Sigmoid colon (tissue), 7 donors: ENCODE measurements at regions of chr3 and their contacts with region 1.

Region 1: GRCh38 chr3:16177962-16178627 is 3.6 kb downstream of the GALNT15 start:
- DNase-seq: peak; percentile 91
- H3K4me3 ChIP-seq: peak overlapping the region; percentile 23 to 40 (median 36)
- H3K27ac ChIP-seq: peak overlapping the region in 1 of 4 donors; percentile 39
- H3K4me1 ChIP-seq: peaks cover 0 to 31% (median 27%) of the 10 kb centered on the region in 4 donors
- H3K27me3 ChIP-seq: no peaks in the 10 kb centered on the region
- CTCF ChIP-seq: peak; percentile 72 to 97 (median 92)
- EP300 ChIP-seq: no peak
- POLR2A ChIP-seq: no peak

Region 2: GRCh38 chr3:15629860-15630597 is 548.1 kb before region 1 on chr3:
- intact Hi-C with region 1: loop called (anchors 10 kb)
- DNase-seq: peak; percentile 85
- H3K4me3 ChIP-seq: peak overlapping the region; percentile 18 to 36 (median 28)
- H3K27ac ChIP-seq: peak overlapping the region; percentile 59 to 90 (median 76)
- H3K4me1 ChIP-seq: peaks cover 0 to 46% (median 44%) of the 10 kb centered on the region in 4 donors
- H3K27me3 ChIP-seq: no peaks in the 10 kb centered on the region
- CTCF ChIP-seq: peak in 3 of 4 experiments; percentile 72 to 87 (median 74)
- EP300 ChIP-seq: no peak
- POLR2A ChIP-seq: no peak

Region 3: DNA sequence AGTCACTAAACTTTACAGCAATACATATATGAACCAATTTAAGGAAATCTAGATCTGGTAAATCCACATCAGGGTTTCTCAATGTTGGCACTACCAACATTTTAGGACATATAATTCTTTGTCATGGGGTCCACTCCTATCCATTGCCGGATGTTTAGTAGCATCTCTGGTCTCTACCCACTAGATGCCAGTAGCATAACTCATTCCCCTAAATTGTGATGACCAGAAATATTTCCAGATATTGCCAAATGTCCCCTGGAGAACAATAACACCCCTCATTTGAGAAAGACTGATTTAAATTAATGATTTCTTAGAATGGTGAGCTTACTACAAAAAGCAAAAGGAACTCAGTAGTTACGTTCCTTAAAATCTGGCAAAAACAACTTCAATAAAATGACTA is 357.2 kb before region 1 on chr3:
- intact Hi-C with region 1: loop called (anchors 2 kb)
- DNase-seq: no peak
- H3K4me3 ChIP-seq: no peak overlapping the region
- H3K27ac ChIP-seq: no peak overlapping the region
- H3K4me1 ChIP-seq: peaks cover 0 to 9% (median 4%) of the 10 kb centered on the region in 4 donors
- H3K27me3 ChIP-seq: no peaks in the 10 kb centered on the region
- CTCF ChIP-seq: no peak
- EP300 ChIP-seq: no peak
- POLR2A ChIP-seq: no peak

Region 4: DNA sequence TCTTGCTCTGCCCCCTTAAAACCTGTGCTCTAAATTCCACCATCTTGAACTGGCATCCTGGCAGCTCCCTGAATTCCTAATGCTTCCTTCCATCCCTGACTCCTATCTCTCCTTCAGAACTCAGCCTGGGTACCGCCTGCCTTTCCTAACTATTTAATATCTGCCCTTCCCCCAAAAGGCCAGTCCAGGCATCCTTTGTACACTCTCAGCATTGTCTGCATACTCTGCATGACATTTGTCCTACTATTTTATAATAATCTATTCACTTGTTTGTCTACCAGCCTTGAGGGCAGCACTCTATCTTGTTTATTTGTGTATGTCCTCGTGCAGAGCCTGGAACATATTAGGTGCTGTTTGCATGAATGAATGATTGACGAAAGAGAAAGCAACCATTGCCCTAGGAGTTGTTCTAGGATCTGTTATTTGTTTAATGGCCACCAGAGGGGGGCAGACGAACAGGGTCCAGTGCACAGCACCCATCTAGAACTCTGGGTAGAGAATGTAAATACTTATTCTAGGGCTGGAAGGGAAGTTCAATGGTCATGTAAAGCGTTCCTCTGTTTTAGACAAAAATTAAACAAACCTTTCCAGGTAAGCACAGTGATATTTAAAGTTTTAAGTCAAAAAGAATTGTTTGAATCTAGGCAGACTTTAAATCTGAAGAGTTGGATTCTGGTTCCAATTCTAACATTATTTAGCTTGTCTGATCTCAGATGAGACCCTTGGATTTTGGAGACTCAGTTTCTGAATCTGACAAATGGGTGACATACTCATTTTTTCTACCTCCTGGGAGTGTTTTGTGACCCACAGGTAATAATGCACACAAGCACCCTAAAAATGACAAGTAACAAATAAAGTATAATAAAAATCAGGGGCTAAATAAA is 129.4 kb before region 1 on chr3:
- intact Hi-C with region 1: loop called (anchors 1 kb)
- DNase-seq: peak; percentile 82
- H3K4me3 ChIP-seq: no peak overlapping the region
- H3K27ac ChIP-seq: no peak overlapping the region
- H3K4me1 ChIP-seq: peaks cover 0 to 5% (median 2%) of the 10 kb centered on the region in 4 donors
- H3K27me3 ChIP-seq: no peaks in the 10 kb centered on the region
- CTCF ChIP-seq: peak; percentile 74 to 86 (median 76)
- EP300 ChIP-seq: no peak
- POLR2A ChIP-seq: no peak

Region 5: DNA sequence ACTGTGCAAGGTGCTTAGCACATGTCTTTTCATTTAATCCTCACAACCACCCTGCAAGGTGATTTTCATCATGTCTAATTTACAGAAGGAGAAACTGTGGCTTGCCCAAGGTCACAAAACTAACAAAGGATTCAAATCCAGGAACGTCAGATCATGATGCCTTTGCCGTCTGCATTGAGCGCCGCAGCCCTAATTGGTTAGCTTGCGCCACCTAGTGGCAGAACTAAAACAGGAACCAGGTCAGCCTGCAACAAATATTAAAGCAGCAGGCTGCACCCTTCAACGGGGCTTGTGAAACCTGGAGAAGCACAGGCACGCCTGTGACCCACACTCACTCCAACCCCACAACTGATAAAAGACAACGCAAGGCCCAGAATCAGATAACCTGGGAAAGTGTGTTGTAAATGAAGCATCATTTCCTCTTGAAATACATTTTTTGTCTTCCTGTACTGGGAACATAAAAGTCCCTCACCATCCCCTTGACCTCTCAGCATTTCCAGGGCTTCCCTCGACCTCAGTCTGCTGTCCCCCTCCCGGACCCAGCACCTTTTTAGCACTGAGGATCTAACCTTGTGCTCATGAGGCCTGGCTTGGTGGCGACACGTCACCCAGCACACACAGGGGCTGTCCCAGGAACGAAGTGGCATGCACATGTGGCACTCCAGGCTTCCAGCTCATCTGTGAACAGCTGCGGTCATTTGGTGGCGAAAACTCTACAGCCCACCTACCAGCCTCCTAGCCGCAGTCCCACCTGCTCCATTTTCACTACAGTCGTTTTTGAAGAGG is 69.4 kb after region 1 on chr3:
- intact Hi-C with region 1: loop called (anchors 2 kb)
- DNase-seq: peak; percentile 87
- H3K4me3 ChIP-seq: no peak overlapping the region
- H3K27ac ChIP-seq: no peak overlapping the region
- H3K4me1 ChIP-seq: peaks cover 0 to 19% (median 4%) of the 10 kb centered on the region in 4 donors
- H3K27me3 ChIP-seq: no peaks in the 10 kb centered on the region
- CTCF ChIP-seq: peak; percentile 78 to 96 (median 82)
- EP300 ChIP-seq: no peak
- POLR2A ChIP-seq: no peak